SK-MEL-5 (cell line): ENCODE measurements at regions of chr10 and their contacts with region 1.

Region 1: DNA sequence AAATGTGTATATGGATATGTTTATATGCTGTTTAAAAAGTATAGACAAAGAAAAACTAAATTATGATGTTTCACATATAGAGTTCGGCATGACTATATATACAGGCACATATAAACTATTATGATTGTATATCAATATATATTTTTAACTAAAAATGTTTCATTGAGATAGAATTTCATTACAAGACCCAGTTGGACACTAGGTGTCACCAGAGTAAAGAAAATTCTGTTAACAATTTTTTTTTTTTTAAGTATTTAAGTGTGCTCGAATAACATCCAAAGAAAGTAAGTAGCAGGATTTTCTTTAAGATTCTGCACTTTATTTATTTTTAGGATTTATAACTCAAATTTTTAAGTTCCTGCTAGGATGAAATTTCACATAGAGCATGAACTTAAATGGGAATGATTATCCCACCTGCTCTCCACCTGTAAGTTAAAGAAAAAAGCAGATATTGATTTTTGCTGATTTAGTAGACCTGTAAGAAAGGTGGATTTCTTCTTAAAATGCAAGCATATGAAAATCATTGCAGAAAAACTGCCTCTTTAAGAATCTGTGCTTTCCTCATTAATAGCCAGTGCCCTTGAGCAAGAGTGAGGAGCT is 961.5 kb downstream of the PCDH15 start:
- DNase-seq: peak; percentile 50

Region 2: DNA sequence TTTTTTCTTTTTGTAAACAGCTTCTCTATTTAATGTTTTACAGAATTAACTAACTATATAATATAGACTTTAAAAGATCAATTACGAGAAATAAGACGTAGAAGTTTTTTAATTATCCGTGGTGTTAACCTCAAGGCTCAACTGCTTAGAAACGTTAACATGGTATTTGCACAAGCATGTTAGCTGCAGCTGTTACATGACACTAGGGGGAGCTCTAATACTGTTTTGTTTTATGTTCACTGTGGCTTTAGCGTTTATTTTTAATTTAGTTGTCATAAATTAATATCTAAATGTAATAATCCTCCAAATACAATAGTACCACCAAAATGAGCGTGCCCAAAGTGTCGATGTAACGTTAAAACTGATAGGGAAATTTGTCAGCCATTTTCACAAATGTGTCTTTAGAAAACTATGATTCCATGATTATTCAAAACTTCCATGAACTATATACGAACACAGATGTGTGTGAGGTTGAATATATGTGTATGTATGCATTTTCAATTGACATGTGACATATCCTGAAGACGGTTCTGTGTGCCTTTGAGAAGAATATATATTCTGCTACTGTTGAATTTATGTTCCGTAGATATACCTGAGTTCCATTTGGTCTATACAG is 238.2 kb before region 1 on chr10:
- in situ Hi-C with region 1: loop called (anchors 25 kb)
- DNase-seq: peak; percentile 44

Region 3: DNA sequence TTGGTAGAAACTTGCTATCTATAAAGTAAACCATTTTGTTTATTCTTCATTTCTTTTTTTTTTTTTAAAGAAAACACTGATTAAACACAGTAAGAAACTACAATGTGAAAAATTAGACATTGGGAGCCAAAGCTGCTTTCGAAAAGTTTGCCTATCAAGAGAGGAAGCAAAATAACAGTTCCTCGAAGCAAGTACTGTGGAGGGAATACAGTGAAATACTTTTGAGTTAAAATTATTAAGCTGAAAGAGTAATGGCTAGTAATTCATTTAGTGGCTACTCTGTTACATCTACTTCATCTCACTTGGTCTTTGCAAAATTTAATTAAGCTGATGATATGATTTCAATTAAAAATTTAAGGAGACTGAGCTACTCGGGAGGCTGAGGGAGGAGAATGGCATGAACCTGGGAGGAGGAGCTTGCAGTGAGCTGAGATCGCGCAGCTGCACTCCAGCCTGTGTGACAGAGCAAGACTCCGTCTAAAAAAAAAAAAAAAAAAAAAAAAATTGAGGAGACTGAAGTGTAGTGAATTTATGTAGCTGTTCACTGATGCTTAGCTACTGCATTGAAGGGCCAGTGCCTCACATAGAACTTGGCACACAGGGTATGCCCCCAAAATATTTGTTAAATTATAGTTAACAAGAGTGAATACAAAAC is 84.8 kb before region 1 on chr10:
- in situ Hi-C with region 1: no loop called
- DNase-seq: peak; percentile 11